ENCODE measurements at regions of chr2 and their contacts with region 1.

Region 1: GRCh38 chr2:31324000-31324633 is 90.2 kb downstream of the EHD3 start:
- DNase-seq: no peak
- H3K4me3 Mint-ChIP-seq: no peak overlapping the region
- H3K27ac Mint-ChIP-seq: no peak overlapping the region
- H3K4me1 Mint-ChIP-seq: peaks cover 35% of the 10 kb centered on the region
- H3K27me3 Mint-ChIP-seq: no peaks in the 10 kb centered on the region

Region 2: GRCh38 chr2:31216734-31217133 is 107.4 kb before region 1 on chr2:
- CTCF ChIA-PET with region 1: no interaction called
- intact Hi-C with region 1: loop called (anchors 1 kb)
- DNase-seq: no peak
- H3K4me3 Mint-ChIP-seq: no peak overlapping the region
- H3K27ac Mint-ChIP-seq: no peak overlapping the region
- H3K4me1 Mint-ChIP-seq: peaks cover 17% of the 10 kb centered on the region
- H3K27me3 Mint-ChIP-seq: peaks cover 7% of the 10 kb centered on the region

Region 3: DNA sequence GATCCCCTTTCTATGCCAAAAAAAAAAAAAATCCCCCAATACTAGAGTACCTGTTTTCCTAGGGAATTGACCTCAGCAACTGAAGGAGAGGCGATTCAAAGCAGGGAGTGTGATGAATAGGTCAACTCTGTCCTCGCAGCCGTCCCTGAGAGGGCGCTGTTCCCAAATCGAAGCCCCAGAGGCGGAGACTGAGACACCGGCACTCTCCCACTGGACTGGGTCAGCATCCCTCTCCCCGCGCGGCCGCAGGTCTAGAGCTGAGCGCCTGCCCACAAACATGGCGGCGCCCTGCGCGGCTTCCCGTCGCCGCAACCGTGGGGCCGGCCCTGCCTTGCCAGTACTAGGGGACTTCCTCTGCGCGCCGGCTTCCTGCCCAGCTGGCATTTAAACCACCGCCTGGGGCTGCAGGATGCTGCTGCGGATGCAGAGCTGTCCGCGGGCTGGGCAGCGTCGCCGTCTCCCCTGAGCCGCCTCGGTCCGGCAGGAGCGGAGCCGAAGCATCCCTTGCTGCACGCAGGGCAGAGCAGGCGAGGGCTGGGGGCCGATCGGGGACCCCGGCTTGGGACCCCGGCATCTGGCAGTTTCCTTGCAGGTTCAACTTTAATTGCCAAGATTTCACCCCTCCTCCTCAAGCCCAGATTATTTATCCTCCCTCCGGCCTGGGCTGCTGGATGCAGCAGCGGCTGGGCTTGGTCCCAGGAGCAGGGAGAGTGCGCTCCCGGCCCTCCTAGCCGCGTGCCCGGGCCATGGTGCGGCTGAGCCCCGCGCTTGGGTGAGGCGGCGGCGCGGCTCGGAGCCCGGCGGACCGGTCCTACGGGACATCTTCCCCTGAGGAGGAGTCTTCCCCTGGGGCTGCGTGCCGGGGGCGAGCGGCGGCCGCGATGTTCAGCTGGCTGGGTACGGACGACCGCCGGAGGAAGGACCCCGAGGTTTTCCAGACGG is 90.1 kb before region 1 on chr2 and contains the start of gene EHD3:
- CTCF ChIA-PET with region 1: no interaction called
- intact Hi-C with region 1: loop called (anchors 2 kb)
- DNase-seq: peak; percentile 89
- H3K4me3 Mint-ChIP-seq: peak within 1 kb of the TSS; percentile 64
- H3K27ac Mint-ChIP-seq: no peak within 1 kb of the TSS
- H3K4me1 Mint-ChIP-seq: peaks cover 14% of the 10 kb centered on the region
- H3K27me3 Mint-ChIP-seq: no peaks in the 10 kb centered on the region
- total RNA-seq, gene EHD3: 0.67 to 0.74 TPM

Region 4: GRCh38 chr2:31297751-31298150 is 26.4 kb before region 1 on chr2:
- CTCF ChIA-PET with region 1: no interaction called
- intact Hi-C with region 1: loop called (anchors 1 kb)
- DNase-seq: peak; percentile 27
- H3K4me3 Mint-ChIP-seq: no peak overlapping the region
- H3K27ac Mint-ChIP-seq: no peak overlapping the region
- H3K4me1 Mint-ChIP-seq: peaks cover 3% of the 10 kb centered on the region
- H3K27me3 Mint-ChIP-seq: no peaks in the 10 kb centered on the region